ENCODE measurements at regions of chr14 and their contacts with region 1.

Region 1: GRCh38 chr14:91996948-91997371 is 42.9 kb downstream of the TRIP11 start:
- DNase-seq: no peak
- H3K4me3 ChIP-seq: no peak overlapping the region
- H3K27ac ChIP-seq: peak overlapping the region in 2 of 4 donors; percentile 12 to 29
- H3K4me1 ChIP-seq: peaks cover 0 to 11% (median 5%) of the 10 kb centered on the region in 4 donors
- H3K27me3 ChIP-seq: no peaks in the 10 kb centered on the region
- CTCF ChIP-seq: peak; percentile 17 to 65 (median 50)
- EP300 ChIP-seq: no peak
- POLR2A ChIP-seq: no peak

Region 2: GRCh38 chr14:91649930-91650329 is 347.0 kb before region 1 on chr14:
- intact Hi-C with region 1: loop called (anchors 2 kb)
- DNase-seq: no peak
- H3K4me3 ChIP-seq: no peak overlapping the region
- H3K27ac ChIP-seq: no peak overlapping the region
- H3K4me1 ChIP-seq: no peaks in the 10 kb centered on the region
- H3K27me3 ChIP-seq: no peaks in the 10 kb centered on the region
- CTCF ChIP-seq: peak; percentile 10 to 70 (median 52)
- EP300 ChIP-seq: no peak
- POLR2A ChIP-seq: no peak

Region 3: DNA sequence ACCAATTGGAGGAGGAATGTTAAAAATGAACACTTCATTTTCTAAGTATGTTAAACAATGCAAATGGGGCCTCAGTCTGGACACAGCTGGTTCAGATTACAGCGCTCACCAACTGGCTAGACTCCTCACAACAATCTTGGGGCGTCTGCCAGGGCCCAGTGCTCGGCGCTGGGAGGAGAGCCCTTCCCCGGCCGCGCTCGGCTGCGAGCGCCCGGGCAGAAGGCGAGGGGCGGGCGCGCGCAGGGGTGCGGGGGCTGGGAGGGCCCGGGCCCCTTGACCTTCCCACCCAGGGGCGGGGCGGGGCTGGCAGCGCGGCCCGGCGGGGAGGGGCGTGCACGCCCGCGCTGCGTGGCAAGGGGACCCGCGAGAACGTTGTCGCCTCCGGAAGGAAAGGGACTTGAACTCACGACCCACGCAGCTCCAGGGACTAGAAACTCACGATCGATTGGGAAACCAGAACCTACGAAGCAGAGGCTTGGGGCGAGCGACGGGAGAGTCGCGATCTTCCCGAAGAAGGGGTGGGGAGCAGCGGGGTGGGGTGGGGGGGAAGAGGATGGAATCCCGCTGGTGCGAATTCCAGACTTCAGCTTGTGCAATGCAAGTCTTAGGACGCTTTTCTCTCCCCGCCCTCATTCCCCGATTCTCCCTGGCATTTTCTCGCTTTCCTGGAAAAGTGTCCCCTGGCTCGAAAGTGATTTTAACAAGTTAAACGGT is 49.3 kb before region 1 on chr14 and contains the start of gene FBLN5:
- intact Hi-C with region 1: loop called (anchors 5 kb)
- DNase-seq: peak; percentile 84
- H3K4me3 ChIP-seq: peak within 1 kb of the TSS; percentile 43 to 63 (median 58)
- H3K27ac ChIP-seq: peak within 1 kb of the TSS; percentile 66 to 87 (median 75)
- H3K4me1 ChIP-seq: peaks cover 0 to 44% (median 12%) of the 10 kb centered on the region in 4 donors
- H3K27me3 ChIP-seq: no peaks in the 10 kb centered on the region
- CTCF ChIP-seq: no peak
- EP300 ChIP-seq: no peak
- POLR2A ChIP-seq: no peak
- total RNA-seq, gene FBLN5: 91.8 to 253 (median 103) TPM

Measured in sigmoid colon (tissue), 7 donors.